Posterior vena cava (tissue), 2 donors: ENCODE measurements at regions of chr10 and their contacts with region 1.

Region 1: GRCh38 chr10:93204494-93205485 is 131.1 kb downstream of the CYP26A1 start:
- DNase-seq: no peak

Region 2: DNA sequence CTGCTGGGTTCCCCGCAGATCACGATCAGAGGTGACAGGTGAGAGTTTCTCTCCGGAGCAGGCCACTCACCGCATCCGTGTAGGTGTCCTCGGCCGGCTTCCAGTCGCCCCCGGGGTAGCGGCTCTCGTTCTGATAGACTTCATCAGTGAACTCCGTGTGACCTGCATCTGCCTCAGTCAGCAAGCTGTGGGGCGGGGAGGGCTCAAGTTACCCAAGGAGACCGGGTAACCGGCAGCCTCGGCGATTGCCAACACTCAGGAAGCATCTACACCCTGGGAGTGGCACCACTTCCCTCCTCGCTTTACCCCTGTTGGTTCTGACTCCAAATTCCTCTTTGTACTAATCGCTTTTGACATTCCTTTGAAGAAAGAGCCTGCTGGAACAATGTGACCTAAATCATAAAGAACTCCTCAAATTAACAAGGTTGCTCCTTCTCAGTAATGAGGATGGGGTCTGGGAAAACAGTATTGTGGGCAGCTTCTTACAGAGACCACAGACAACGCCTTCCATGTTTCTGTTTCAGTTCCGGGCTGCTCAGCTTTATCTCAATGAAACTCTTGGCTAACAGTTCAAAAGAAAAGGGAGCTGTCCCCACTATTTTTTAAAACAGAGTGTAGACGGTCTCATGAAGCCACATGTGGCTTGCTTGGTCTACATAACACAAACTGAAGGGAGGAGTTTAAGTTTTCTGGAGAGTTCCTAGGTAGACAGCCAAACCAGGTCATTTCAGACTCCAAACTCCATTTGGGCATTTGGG is 159.3 kb after region 1 on chr10:
- intact Hi-C with region 1: loop called in 1 of 2 experiments (anchors 5 kb)
- DNase-seq: peak; percentile 88